Posterior cingulate gyrus (tissue), 11 donors: ENCODE measurements at regions of chr7 and their contacts with region 1.

Region 1: GRCh38 chr7:23181684-23182553 is at the start of gene NUP42:
- DNase-seq: peak; percentile 88 to 98 (median 91)

Region 2: GRCh38 chr7:22980422-22980821 is 201.5 kb before region 1 on chr7:
- intact Hi-C with region 1: no loop called
- DNase-seq: no peak

Region 3: GRCh38 chr7:23105644-23106056 is 76.3 kb before region 1 on chr7 and contains the start of gene KLHL7:
- intact Hi-C with region 1: loop called (anchors 2 kb)
- DNase-seq: peak; percentile 94 to 99 (median 97)

Region 4: GRCh38 chr7:23261843-23262452 is 80.0 kb after region 1 on chr7:
- intact Hi-C with region 1: loop called (anchors 5 kb)
- DNase-seq: peak in 8 of 10 donors; percentile 29 to 91 (median 60)

Region 5: DNA sequence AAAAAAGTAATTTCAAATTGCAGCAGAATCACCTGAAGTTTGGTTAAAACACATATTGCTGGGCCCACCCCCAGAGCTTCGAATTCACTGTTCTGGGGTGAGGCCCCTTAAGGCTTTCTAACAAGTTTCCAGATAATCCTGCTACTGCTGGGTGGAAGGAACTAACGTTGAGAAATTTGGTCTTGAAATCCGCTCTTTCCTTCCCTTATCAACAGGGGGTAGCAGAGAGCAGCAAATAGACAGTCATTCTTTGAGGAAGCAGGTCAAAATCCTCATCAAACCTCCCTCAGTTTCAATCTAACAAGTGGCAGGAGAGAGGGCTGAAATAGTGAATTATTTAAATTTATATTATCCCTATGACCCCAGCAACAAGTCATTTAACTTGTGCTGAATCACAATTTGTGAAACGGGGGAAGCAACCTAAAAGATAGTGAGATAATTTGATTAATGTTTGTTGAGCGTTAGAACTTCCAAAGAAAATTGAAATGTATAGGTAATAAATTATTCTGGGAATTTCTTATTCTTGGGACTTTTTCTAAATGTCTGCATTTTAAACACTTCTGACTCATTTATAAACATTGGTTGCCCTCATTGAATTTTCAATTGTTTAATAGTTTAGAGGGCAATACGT is 95.6 kb after region 1 on chr7:
- intact Hi-C with region 1: loop called (anchors 5 kb)
- DNase-seq: no peak

Region 6: GRCh38 chr7:23462846-23463245 is 280.9 kb after region 1 on chr7:
- intact Hi-C with region 1: no loop called
- DNase-seq: no peak

Region 7: DNA sequence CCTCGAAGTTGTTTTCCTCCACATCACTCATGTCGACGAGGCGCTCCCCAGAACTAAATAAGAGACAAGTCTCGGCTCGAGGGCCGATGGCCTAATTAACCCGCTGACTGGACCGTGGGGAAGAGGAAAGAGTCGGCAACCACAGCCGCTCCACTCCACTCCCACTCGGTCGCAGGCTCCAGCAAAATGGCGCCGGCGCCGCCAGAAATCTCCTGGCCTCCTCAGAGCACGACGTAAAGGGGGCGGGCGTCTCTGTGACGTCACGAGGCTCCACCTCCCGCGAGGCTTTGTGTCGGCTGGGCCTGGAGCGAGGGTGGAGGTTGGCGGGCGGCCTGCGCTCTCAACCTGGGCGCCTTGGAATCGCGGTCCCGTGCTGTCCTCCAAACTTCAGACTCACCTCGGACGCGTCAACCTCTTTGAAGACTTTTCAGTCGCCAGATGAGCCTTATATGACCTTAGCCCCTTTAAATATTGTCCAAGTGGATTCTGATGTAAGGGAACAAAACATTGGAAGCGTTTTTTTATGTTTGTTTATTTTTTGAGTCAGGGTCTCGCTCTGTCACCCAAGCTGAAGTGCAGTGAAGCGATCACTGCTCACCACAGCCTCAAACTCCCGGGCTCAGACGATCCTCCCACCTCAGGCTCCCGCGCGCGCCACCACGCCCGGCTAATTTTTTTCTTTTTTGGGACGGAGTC is 350.0 kb after region 1 on chr7 and contains the start of gene TRA2A:
- intact Hi-C with region 1: loop called (anchors 5 kb)
- DNase-seq: peak; percentile 94 to 100 (median 98)